ENCODE measurements at regions of chr3 and their contacts with region 1.

Region 1: GRCh38 chr3:185561374-185561943 is 9.1 kb upstream of the LIPH start:
- DNase-seq: peak; percentile 26 to 60
- H3K4me3 ChIP-seq: peak overlapping the region; percentile 53; the same call in 1 of the 2 replicates
- H3K27ac ChIP-seq: peak overlapping the region; percentile 99; the same call in 1 of the 2 replicates
- H3K4me1 ChIP-seq: peaks cover 49% of the 10 kb centered on the region
- H3K27me3 ChIP-seq: no peaks in the 10 kb centered on the region
- CTCF ChIP-seq: no peak

Region 2: DNA sequence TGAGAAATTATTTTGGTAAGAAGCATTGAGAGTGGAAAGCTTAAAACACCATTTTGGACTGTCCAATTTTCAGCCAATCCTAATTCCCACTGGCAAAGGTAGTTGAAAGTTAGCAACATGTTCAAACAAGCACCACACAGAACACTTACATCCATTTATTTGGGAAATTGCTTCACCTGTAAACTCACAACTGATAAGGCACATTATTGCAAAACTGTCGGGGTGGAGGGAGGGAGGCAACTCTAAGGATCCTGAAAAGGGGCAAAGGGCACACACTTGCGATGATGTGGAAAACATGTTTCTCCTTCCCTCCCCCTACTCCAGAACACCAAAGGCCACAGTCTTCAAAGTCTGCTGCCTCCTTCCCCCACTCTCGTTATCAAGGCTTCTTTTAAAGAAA is 72.0 kb before region 1 on chr3:
- CTCF ChIA-PET with region 1: interaction called, 3 read pairs
- POLR2A ChIA-PET with region 1: interaction called, 11 read pairs
- intact Hi-C with region 1: no loop called
- DNase-seq: no peak
- H3K4me3 ChIP-seq: no peak overlapping the region
- H3K27ac ChIP-seq: no peak overlapping the region
- H3K4me1 ChIP-seq: no peaks in the 10 kb centered on the region
- H3K27me3 ChIP-seq: no peaks in the 10 kb centered on the region
- CTCF ChIP-seq: no peak

Region 3: GRCh38 chr3:185498503-185499396 is 62.7 kb before region 1 on chr3 and contains the start of gene TMEM41A:
- CTCF ChIA-PET with region 1: interaction called, 7 read pairs
- POLR2A ChIA-PET with region 1: interaction called, 5 read pairs
- intact Hi-C with region 1: loop called (anchors 1 kb)
- DNase-seq: peak; percentile 81 to 98
- H3K4me3 ChIP-seq: peak within 1 kb of the TSS; percentile 78
- H3K27ac ChIP-seq: peak within 1 kb of the TSS; percentile 74
- H3K4me1 ChIP-seq: peaks cover 11% of the 10 kb centered on the region
- H3K27me3 ChIP-seq: no peaks in the 10 kb centered on the region
- CTCF ChIP-seq: 0 out of 2 replicates have a peak, but pooled peaks have one; percentile 17
- total RNA-seq, gene TMEM41A: 37.2 and 54.1 TPM in 2 replicates

Region 4: GRCh38 chr3:185605566-185605965 is 44.1 kb after region 1 on chr3:
- CTCF ChIA-PET with region 1: interaction called, 14 read pairs
- POLR2A ChIA-PET with region 1: interaction called, 4 read pairs
- intact Hi-C with region 1: no loop called
- DNase-seq: no peak
- H3K4me3 ChIP-seq: no peak overlapping the region
- H3K27ac ChIP-seq: no peak overlapping the region
- H3K4me1 ChIP-seq: no peaks in the 10 kb centered on the region
- H3K27me3 ChIP-seq: no peaks in the 10 kb centered on the region
- CTCF ChIP-seq: no peak